B cell (primary cell): ENCODE measurements at regions of chr2 and their contacts with region 1.

Region 1: GRCh38 chr2:84781942-84782716 is 98.8 kb downstream of the TRABD2A start:
- DNase-seq: peak; percentile 52
- ATAC-seq: peak; percentile 94
- H3K4me3 ChIP-seq: no peak overlapping the region
- H3K4me3 Mint-ChIP-seq: no peak overlapping the region
- H3K27ac ChIP-seq: peak overlapping the region; percentile 33 to 34
- H3K27ac Mint-ChIP-seq: peak overlapping the region; percentile 62
- H3K4me1 ChIP-seq: peaks cover 29 to 30% of the 10 kb centered on the region in 2 donors
- H3K4me1 Mint-ChIP-seq: peaks cover 34% of the 10 kb centered on the region
- H3K27me3 ChIP-seq: no peaks in the 10 kb centered on the region
- H3K27me3 Mint-ChIP-seq: no peaks in the 10 kb centered on the region
- CTCF ChIP-seq: no peak

Region 2: GRCh38 chr2:84546551-84546950 is 235.6 kb before region 1 on chr2:
- CTCF ChIA-PET with region 1: no interaction called
- POLR2A ChIA-PET with region 1: no interaction called
- intact Hi-C with region 1: no loop called
- DNase-seq: no peak
- ATAC-seq: no peak
- H3K4me3 ChIP-seq: no peak overlapping the region
- H3K4me3 Mint-ChIP-seq: no peak overlapping the region
- H3K27ac ChIP-seq: no peak overlapping the region
- H3K27ac Mint-ChIP-seq: no peak overlapping the region
- H3K4me1 ChIP-seq: no peaks in the 10 kb centered on the region
- H3K4me1 Mint-ChIP-seq: no peaks in the 10 kb centered on the region
- H3K27me3 ChIP-seq: no peaks in the 10 kb centered on the region
- H3K27me3 Mint-ChIP-seq: peaks cover 1% of the 10 kb centered on the region
- CTCF ChIP-seq: no peak

Region 3: DNA sequence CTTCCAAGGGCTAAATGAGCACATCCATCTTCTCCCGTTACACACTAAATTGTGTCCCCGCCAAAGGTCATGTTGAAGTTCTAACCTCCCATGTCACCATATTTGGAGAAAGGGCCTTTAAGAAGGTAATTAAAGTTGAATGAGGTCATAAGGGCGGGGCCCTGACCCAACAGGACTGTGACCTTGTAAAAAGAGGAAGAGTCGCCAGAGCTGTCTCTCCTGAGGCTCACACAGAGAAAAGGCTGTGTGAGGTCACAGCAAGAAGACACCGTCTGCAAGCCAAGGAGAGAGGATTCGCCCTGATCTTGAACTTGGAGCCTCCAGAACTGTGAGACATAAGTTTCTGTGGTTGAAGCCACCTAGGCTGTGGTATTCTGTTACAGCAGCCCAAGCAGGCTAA is 74.7 kb after region 1 on chr2:
- CTCF ChIA-PET with region 1: no interaction called
- POLR2A ChIA-PET with region 1: no interaction called
- intact Hi-C with region 1: loop called (anchors 5 kb)
- DNase-seq: peak; percentile 66
- ATAC-seq: peak; percentile 88
- H3K4me3 ChIP-seq: no peak overlapping the region
- H3K4me3 Mint-ChIP-seq: no peak overlapping the region
- H3K27ac ChIP-seq: no peak overlapping the region
- H3K27ac Mint-ChIP-seq: no peak overlapping the region
- H3K4me1 ChIP-seq: peaks cover 11 to 13% of the 10 kb centered on the region in 2 donors
- H3K4me1 Mint-ChIP-seq: peaks cover 24% of the 10 kb centered on the region
- H3K27me3 ChIP-seq: no peaks in the 10 kb centered on the region
- H3K27me3 Mint-ChIP-seq: no peaks in the 10 kb centered on the region
- CTCF ChIP-seq: no peak